ENCODE measurements at regions of chr1 and their contacts with region 1.

Region 1: GRCh38 chr1:226424228-226425003 is 16.5 kb upstream of the PARP1 start:
- DNase-seq: no peak
- ATAC-seq: peak in 3 of 4 donors; percentile 71 to 84 (median 77)
- H3K4me3 ChIP-seq: no peak overlapping the region
- H3K27ac ChIP-seq: no peak overlapping the region
- H3K4me1 ChIP-seq: peaks cover 0 to 9% (median 0%) of the 10 kb centered on the region in 12 donors
- H3K27me3 ChIP-seq: no peaks in the 10 kb centered on the region
- CTCF ChIP-seq: peak; percentile 37 to 71 (median 61)
- POLR2A ChIP-seq: no peak

Region 2: GRCh38 chr1:226603022-226603857 is 178.8 kb after region 1 on chr1:
- intact Hi-C with region 1: loop called (anchors 2 to 10 kb)
- DNase-seq: peak in 4 of 5 donors; percentile 71 to 80 (median 72)
- ATAC-seq: peak in 3 of 4 donors; percentile 50 to 75 (median 69)
- H3K4me3 ChIP-seq: peak overlapping the region in 8 of 12 donors; percentile 3 to 46 (median 23)
- H3K27ac ChIP-seq: peak overlapping the region in 11 of 12 donors; percentile 46 to 83 (median 70)
- H3K4me1 ChIP-seq: peaks cover 0 to 46% (median 27%) of the 10 kb centered on the region in 12 donors
- H3K27me3 ChIP-seq: no peaks in the 10 kb centered on the region
- CTCF ChIP-seq: no peak
- POLR2A ChIP-seq: no peak

Region 3: GRCh38 chr1:226608699-226609505 is 184.5 kb after region 1 on chr1:
- intact Hi-C with region 1: loop called (anchors 2 to 10 kb)
- DNase-seq: peak; percentile 51 to 85 (median 66)
- ATAC-seq: peak in 3 of 4 donors; percentile 33 to 59 (median 57)
- H3K4me3 ChIP-seq: no peak overlapping the region
- H3K27ac ChIP-seq: no peak overlapping the region
- H3K4me1 ChIP-seq: peaks cover 0 to 27% (median 17%) of the 10 kb centered on the region in 12 donors
- H3K27me3 ChIP-seq: peaks cover 0 to 2% (median 0%) of the 10 kb centered on the region in 9 donors
- CTCF ChIP-seq: peak; percentile 69 to 89 (median 84)
- POLR2A ChIP-seq: no peak

Region 4: GRCh38 chr1:226626577-226626956 is 202.2 kb after region 1 on chr1:
- intact Hi-C with region 1: loop called in 1 of 10 experiments (anchors 5 kb)
- DNase-seq: peak; percentile 75 to 83 (median 76)
- ATAC-seq: peak; percentile 80 to 90 (median 88)
- H3K4me3 ChIP-seq: no peak overlapping the region
- H3K27ac ChIP-seq: peak overlapping the region in 1 of 12 donors; percentile 32
- H3K4me1 ChIP-seq: peaks cover 0 to 10% (median 6%) of the 10 kb centered on the region in 12 donors
- H3K27me3 ChIP-seq: no peaks in the 10 kb centered on the region
- CTCF ChIP-seq: peak; percentile 94 to 99 (median 97)
- POLR2A ChIP-seq: no peak

Region 5: DNA sequence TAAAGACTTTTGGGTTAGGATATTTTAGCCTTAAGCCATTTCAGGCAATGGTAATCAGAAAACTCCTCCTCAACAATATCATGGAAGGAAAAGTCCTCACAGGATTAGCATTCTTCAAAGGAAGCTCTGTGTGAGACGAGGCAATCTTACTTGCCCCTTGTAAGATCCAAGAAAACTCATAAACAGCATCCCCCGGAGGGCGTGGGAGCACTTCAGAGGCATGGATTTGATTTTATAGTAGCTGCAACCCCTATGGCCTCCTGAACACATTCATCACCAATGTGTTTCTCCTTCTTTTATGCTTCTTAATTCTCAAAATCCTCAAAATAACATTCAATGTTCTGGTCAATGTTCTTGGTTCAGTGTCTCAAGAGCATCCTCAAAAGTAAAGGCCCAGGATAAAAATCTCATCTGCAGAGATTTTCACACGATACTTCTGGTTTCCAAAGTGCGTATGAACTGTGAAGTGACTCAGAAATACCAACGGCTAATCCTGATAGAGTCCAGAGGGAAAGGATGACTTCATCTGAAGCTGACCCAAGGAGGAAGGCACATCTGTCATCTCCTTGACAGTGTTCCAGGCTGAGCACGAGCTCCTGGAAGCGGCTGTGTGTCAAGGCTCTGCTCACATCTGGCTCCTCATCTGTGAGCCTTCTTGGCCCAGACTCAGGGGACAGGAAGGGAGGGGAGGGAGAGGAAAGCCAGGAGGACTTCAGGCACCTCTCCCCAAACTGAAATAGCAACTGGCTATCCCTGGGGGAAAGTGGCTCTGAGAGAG is 396.7 kb after region 1 on chr1:
- intact Hi-C with region 1: loop called in 4 of 10 experiments (anchors 5 to 10 kb)
- DNase-seq: peak in 4 of 5 donors; percentile 87 to 91 (median 88)
- ATAC-seq: peak; percentile 86 to 97 (median 96)
- H3K4me3 ChIP-seq: no peak overlapping the region
- H3K27ac ChIP-seq: peak overlapping the region; percentile 39 to 88 (median 72)
- H3K4me1 ChIP-seq: peaks cover 3 to 37% (median 24%) of the 10 kb centered on the region in 12 donors
- H3K27me3 ChIP-seq: no peaks in the 10 kb centered on the region
- CTCF ChIP-seq: no peak
- POLR2A ChIP-seq: no peak

Region 6: DNA sequence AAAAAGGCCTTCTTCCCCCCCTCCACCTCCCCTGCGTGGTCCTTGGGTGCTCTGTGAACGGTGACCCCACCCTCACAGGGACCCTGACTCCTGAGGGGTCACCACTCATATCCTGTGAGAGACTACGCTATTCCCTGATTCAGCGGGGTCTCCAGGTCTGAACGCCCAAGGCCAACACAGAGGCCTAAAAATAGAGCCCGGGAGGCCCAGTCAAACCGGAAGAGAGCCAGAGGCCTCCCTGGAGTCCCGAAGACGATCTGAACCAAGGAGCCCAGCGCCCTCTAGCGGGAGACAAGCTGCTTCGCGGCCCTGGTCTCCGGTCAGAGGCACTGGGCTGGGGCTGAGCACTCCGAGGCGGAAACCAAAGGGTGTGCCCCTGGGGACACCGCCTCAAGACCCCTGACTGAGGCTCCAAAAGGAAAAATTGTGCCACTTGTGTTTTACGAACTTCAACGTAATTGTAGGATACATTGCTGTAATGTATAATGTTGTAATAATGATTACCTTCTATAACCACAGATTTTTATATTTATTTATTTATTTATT is 403.6 kb after region 1 on chr1:
- intact Hi-C with region 1: loop called in 4 of 10 experiments (anchors 5 to 10 kb)
- DNase-seq: peak; percentile 94 to 98 (median 97)
- ATAC-seq: peak; percentile 96 to 98 (median 97)
- H3K4me3 ChIP-seq: peak overlapping the region in 8 of 12 donors; percentile 18 to 47 (median 33)
- H3K27ac ChIP-seq: peak overlapping the region; percentile 27 to 93 (median 85)
- H3K4me1 ChIP-seq: peaks cover 0 to 20% (median 14%) of the 10 kb centered on the region in 12 donors
- H3K27me3 ChIP-seq: no peaks in the 10 kb centered on the region
- CTCF ChIP-seq: peak; percentile 92 to 98 (median 96)
- POLR2A ChIP-seq: no peak